ENCODE measurements at regions of chr6 and their contacts with region 1.

Region 1: DNA sequence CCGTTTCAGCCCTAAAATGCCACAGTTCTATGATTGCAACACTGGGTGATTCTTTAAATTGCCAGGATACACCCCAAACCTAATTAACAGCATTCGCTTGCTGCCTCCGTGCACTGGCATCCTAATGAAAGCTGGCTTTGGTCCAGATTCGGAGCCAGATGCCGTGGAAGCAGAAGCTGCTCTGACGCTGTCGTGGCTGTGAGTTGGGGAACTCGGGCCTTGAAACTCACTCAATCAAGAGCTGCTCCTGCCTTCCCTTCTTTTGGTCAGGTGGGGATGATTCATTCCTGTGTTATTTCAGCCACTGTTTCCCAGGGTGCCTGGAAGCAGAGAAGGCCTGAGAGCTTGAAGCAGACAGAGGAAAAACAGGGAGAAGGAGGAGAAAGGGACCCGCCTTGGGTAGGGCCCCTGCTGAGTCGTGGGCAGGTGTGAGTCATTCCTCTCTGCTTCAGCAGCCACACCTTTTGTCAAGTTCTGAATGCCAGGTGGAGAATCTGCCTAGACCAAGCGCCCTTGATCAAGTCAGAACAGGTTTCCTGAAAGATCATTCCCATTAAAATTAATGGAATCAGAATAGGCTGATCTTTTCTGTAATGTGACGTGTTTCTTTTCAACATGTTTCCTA is 36.2 kb upstream of the DSP start:
- DNase-seq: peak; percentile 21

Region 2: DNA sequence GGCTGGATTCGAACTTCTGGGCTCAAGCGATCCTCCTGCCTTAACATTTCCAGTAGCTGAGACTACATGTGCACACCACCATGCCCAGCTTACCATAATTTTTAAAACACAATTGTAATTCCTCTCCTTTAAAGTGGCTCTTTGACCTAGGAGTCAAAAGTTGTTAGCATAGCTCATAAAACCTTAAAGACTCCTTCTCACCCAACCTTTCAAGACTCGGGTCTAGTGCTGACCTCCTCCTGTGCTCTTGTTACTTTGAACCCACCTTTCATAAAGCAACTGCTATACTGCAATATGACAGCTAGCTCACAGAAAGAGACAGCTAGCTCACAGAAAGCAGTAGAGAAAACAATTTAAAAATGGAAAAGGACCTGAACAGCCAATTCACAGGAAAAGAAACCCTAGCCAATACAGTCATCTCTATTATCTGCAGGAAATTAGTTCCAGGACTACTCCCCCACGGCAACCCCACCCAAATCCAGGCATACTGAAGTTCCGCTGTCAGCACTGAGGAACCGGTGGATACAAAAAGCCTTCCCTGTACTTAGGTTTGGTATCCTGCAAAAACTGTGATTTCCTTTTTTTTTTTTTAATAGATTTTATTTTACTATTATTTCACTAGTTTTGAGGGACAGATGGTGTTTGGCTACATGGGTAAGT is 212.6 kb before region 1 on chr6:
- CTCF ChIA-PET with region 1: no interaction called
- POLR2A ChIA-PET with region 1: no interaction called
- DNase-seq: no peak

Region 3: GRCh38 chr6:7389451-7390225 is 115.7 kb before region 1 on chr6 and contains the starts of genes CAGE1 and RIOK1:
- CTCF ChIA-PET with region 1: interaction called, 10 read pairs
- POLR2A ChIA-PET with region 1: interaction called, 3 read pairs
- DNase-seq: peak; percentile 95

Region 4: DNA sequence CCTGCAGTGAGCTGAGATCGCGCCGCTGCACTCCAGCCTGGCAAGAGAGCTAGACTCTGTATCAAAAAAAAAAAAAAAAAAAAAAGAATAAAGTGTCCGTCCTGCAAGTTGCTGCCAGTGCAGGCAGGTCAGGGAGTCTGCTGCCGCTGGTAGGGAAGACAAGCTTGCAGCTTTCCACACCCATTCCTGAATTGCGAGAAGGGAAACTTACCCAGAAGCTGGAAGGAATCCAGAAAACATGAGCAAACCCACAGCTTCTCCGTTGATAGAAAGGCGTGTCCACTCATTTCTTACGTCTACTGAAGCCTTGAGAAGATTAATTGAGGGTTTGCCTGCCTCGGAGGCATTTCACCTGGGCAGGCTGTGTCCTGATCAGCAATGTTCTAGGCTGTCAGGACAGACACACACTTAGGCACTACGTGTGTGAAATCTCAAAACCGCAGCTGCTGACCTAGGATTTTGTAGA is 25.5 kb before region 1 on chr6:
- CTCF ChIA-PET with region 1: no interaction called
- POLR2A ChIA-PET with region 1: no interaction called
- DNase-seq: peak; percentile 25

Measured in HEK293T (cell line).